AG04450 (cell line): ENCODE measurements at regions of chr17 and their contacts with region 1.

Region 1: DNA sequence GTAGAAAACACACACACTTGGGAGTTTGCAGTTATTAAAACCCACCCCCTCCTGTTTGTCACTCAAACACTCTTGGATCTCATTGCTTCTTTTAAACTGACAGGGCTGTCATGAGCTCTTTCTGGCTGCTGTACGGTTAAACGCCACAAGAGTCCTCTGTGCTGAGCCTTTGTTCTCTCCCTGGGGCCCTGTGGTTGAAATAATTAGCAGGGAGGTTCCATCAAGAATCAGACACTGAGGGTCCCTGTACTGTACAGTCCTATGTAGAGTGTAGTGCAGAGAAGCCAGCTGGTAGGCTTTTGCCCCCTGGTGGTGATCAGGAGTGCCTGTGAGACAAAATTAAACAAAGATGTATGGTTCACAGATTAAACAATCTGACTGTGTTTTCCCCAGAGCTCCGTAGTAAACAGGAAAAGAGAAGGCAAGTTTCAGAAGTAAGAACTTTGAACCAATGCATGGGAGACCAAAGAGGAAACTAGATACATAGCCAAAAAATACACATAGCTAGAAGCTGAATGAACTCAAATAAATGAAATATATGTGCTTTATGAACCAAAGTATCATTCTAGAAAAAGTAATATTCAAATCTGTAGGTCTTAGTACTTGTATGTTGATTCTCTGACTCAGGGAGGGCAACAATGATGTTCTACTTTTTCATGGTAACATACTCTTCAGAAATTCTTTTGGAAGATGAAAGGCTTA is 1.4 kb upstream of the SSH2 start:
- DNase-seq: peak; percentile 51
- H3K4me3 ChIP-seq: no peak overlapping the region; the same call in 1 of the 2 replicates
- H3K27ac ChIP-seq: no peak overlapping the region
- H3K27me3 ChIP-seq: no peaks in the 10 kb centered on the region
- CTCF ChIP-seq: peak; percentile 96

Region 2: DNA sequence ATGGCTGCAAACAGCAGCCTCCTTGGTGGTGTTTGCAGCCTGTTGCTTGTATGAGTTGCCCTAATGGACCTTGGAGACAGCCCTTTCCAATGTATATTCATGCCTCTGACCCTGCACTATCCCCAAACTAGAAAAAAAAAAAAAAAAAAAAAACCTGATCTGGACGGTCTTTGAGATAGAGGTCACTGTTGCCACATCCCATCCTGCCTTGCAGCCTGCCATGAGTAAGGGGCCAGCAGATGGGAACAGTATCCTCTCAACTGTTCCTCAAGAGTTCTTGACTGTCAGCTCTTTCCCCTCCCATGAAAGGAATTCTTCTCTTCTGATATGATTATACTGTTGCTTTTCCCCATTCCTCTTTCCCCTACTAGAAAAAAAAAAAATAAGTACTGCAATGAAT is 153.7 kb before region 1 on chr17:
- CTCF ChIA-PET with region 1: interaction called, 27 read pairs
- POLR2A ChIA-PET with region 1: no interaction called
- DNase-seq: no peak
- H3K4me3 ChIP-seq: no peak overlapping the region
- H3K27ac ChIP-seq: no peak overlapping the region
- H3K27me3 ChIP-seq: no peaks in the 10 kb centered on the region
- CTCF ChIP-seq: no peak

Region 3: DNA sequence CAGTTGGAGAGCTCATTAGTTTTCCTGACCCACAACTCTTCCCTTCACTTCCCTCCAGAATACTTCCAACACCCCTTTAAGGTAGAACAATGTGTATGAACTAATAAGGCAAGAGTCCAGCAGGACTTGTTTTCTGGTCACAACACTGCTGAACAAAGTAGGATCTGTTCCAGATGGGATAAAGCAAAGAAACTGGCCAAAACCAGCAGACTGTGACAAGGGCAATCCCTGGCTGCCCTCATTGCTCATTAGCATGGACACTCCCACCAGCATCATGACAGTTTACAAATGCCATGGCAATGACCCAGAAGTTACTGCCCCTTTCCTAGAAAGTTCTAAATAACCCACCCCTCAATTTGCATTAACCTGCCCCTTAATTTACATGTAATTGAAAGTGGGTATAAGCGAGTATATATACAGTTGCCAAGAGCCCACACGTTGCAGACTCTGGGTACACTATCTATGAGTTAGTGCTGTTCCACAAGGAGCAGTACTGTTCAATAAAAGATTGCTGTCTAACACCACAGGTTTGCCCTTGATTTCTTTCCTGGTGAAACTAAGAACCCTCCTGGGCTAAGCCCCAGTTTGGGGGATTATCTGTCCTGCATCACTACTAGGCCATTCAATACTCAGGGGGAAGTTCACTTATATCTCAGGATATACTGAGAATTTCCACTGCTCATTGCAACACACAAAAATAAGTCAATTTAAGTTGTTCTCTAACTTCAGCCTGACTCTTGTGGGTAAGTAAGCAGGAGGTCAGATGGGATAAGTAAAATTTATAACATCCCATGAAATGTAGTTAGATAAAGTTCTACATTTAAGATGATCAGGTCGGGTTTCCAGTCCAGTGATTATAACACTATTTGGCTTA is 83.6 kb before region 1 on chr17:
- CTCF ChIA-PET with region 1: interaction called, 11 read pairs
- POLR2A ChIA-PET with region 1: interaction called, 7 read pairs
- DNase-seq: no peak
- H3K4me3 ChIP-seq: no peak overlapping the region
- H3K27ac ChIP-seq: no peak overlapping the region
- H3K27me3 ChIP-seq: no peaks in the 10 kb centered on the region
- CTCF ChIP-seq: no peak

Region 4: GRCh38 chr17:29918922-29919856 is 12.2 kb before region 1 on chr17:
- CTCF ChIA-PET with region 1: interaction called, 35 read pairs
- POLR2A ChIA-PET with region 1: interaction called, 5 read pairs
- DNase-seq: no peak
- H3K4me3 ChIP-seq: no peak overlapping the region
- H3K27ac ChIP-seq: peak overlapping the region; percentile 52
- H3K27me3 ChIP-seq: no peaks in the 10 kb centered on the region
- CTCF ChIP-seq: no peak

Region 5: GRCh38 chr17:30093463-30094147 is 162.2 kb after region 1 on chr17:
- CTCF ChIA-PET with region 1: interaction called, 109 read pairs
- POLR2A ChIA-PET with region 1: no interaction called
- DNase-seq: no peak
- H3K4me3 ChIP-seq: no peak overlapping the region
- H3K27ac ChIP-seq: no peak overlapping the region
- H3K27me3 ChIP-seq: peaks cover 3% of the 10 kb centered on the region
- CTCF ChIP-seq: peak; percentile 71